Caco-2 (cell line): ENCODE measurements at regions of chr10 and their contacts with region 1.

Region 1: DNA sequence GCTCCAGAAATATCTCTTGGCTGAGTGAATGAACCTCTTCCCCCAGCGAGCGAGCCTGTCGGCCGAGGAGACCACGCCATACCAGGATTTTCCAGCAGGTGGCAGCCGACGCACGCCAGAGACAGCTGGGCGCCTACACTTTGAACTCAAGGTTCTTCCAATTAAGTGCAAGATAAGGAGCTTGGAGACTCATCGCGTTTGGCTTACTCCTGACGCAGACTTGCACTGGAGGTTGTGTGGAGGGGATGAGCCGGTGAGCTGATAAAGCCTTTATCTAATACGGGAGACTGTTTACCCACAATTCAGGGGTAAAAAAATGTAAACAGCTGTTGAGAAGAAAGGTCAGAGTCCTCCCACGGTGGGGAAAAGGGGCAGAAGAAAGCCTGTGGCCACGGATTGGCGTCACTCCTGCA is 45.9 kb upstream of the EMX2 start:
- DNase-seq: peak; percentile 91
- H3K4me3 ChIP-seq: no peak overlapping the region
- H3K4me3 Mint-ChIP-seq: peak overlapping the region; percentile 59
- H3K27ac Mint-ChIP-seq: peak overlapping the region; percentile 69
- H3K4me1 ChIP-seq: peaks cover 17% of the 10 kb centered on the region
- H3K4me1 Mint-ChIP-seq: peaks cover 11% of the 10 kb centered on the region
- H3K27me3 ChIP-seq: no peaks in the 10 kb centered on the region
- H3K27me3 Mint-ChIP-seq: no peaks in the 10 kb centered on the region
- CTCF ChIP-seq: peak; percentile 93 to 94

Region 2: DNA sequence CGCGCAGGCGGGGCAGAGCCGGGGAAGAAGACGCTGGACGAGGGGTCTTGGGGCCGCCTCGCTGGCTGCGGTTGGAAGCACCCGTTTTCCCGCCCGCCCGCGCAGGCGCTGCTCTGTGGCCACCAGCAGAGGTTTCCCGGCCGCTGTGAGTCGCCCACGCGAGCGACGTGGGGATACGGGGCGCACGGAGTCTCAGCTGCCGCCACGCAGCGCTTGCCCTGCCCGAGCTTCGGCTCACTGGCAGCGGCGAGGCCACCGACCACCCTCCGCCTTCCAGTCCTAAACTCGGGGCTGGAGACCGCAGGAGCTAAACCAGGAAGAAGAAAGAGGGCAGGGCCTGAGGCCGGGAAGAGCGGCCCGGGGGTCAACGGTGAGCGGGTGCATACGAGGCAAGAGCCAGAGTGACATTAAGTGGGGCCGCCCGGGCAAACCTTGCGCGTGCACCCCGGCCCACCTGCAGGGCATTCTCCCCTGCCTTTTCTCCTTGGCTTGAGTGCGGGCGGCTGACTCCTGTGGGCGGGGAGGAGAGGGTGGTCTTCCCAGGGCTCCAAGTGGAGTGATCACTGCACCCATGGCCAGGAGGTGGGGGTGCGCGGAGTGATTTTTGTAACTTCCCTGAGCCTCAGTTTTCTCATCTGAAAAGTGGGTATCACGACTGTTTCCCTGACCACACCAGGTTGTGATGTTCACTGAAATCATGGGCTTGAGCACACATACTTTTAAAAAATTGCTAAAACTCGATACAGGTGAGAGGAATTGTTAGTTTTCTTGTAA is 38.9 kb after region 1 on chr10:
- CTCF ChIA-PET with region 1: interaction called, 11 read pairs
- POLR2A ChIA-PET with region 1: no interaction called
- intact Hi-C with region 1: no loop called
- DNase-seq: peak in 1 of 2 experiments; percentile 32
- H3K4me3 ChIP-seq: peak overlapping the region; percentile 50
- H3K4me3 Mint-ChIP-seq: peak overlapping the region; percentile 72
- H3K27ac Mint-ChIP-seq: no peak overlapping the region
- H3K4me1 ChIP-seq: peaks cover 21% of the 10 kb centered on the region
- H3K4me1 Mint-ChIP-seq: peaks cover 3% of the 10 kb centered on the region
- H3K27me3 ChIP-seq: no peaks in the 10 kb centered on the region
- H3K27me3 Mint-ChIP-seq: no peaks in the 10 kb centered on the region
- CTCF ChIP-seq: no peak

Region 3: GRCh38 chr10:117662126-117662525 is 165.5 kb after region 1 on chr10:
- CTCF ChIA-PET with region 1: interaction called, 3 read pairs
- POLR2A ChIA-PET with region 1: interaction called, 11 read pairs
- intact Hi-C with region 1: no loop called
- DNase-seq: no peak
- H3K4me3 ChIP-seq: no peak overlapping the region
- H3K4me3 Mint-ChIP-seq: no peak overlapping the region
- H3K27ac Mint-ChIP-seq: no peak overlapping the region
- H3K4me1 ChIP-seq: no peaks in the 10 kb centered on the region
- H3K4me1 Mint-ChIP-seq: no peaks in the 10 kb centered on the region
- H3K27me3 ChIP-seq: no peaks in the 10 kb centered on the region
- H3K27me3 Mint-ChIP-seq: peaks cover 4% of the 10 kb centered on the region
- CTCF ChIP-seq: no peak

Region 4: DNA sequence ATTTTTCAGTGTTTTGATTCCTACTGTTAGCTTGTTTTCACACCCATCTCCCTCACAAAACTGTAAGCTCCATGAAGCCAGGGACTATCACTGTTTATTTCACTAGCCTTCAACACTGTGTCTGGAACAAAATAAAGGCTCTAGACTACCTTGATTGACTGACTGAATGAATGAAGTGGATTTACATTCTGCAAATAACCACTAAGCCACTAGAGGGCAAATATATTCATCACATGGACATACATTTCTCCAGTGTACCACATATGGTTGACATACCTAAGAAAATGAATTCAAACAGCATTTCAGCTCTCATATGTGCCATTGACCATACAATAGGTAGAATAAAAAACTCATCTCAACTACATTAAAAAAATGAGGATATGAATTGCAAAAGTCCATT is 364.2 kb after region 1 on chr10:
- CTCF ChIA-PET with region 1: no interaction called
- POLR2A ChIA-PET with region 1: no interaction called
- intact Hi-C with region 1: loop called (anchors 2 kb)
- DNase-seq: peak in 1 of 2 experiments; percentile 17
- H3K4me3 ChIP-seq: no peak overlapping the region
- H3K4me3 Mint-ChIP-seq: no peak overlapping the region
- H3K27ac Mint-ChIP-seq: no peak overlapping the region
- H3K4me1 ChIP-seq: no peaks in the 10 kb centered on the region
- H3K4me1 Mint-ChIP-seq: no peaks in the 10 kb centered on the region
- H3K27me3 ChIP-seq: no peaks in the 10 kb centered on the region
- H3K27me3 Mint-ChIP-seq: peaks cover 12% of the 10 kb centered on the region
- CTCF ChIP-seq: peak; percentile 53 to 62

Region 5: GRCh38 chr10:118246332-118247203 is 749.9 kb after region 1 on chr10:
- CTCF ChIA-PET with region 1: no interaction called
- POLR2A ChIA-PET with region 1: no interaction called
- intact Hi-C with region 1: loop called (anchors 1 kb)
- DNase-seq: no peak
- H3K4me3 ChIP-seq: no peak overlapping the region
- H3K4me3 Mint-ChIP-seq: no peak overlapping the region
- H3K27ac Mint-ChIP-seq: no peak overlapping the region
- H3K4me1 ChIP-seq: no peaks in the 10 kb centered on the region
- H3K4me1 Mint-ChIP-seq: no peaks in the 10 kb centered on the region
- H3K27me3 ChIP-seq: peaks cover under 1% of the 10 kb centered on the region; the same call in 1 of the 2 replicates
- H3K27me3 Mint-ChIP-seq: peaks cover 12% of the 10 kb centered on the region
- CTCF ChIP-seq: no peak